Activated T-helper 2 cell treated with anti-CD3 and anti-CD28 coated beads, Interferon-gamma antibody, Interleukin-2, Interleukin-4, amounts not matched to agents 10 μg/mL and 5 μg/mL and 100 μg/mL, durations not matched to agents 14 hours and 24 hours and 36 hours (primary cell): ENCODE measurements at regions of chr1 and their contacts with region 1.

Region 1: GRCh38 chr1:110235834-110236682 is 25.9 kb downstream of the KCNC4 start:
- DNase-seq: no peak
- H3K4me3 Mint-ChIP-seq: peak overlapping the region; percentile 66
- H3K27ac Mint-ChIP-seq: peak overlapping the region; percentile 94
- H3K4me1 Mint-ChIP-seq: peaks cover 41% of the 10 kb centered on the region
- H3K27me3 Mint-ChIP-seq: no peaks in the 10 kb centered on the region

Region 2: GRCh38 chr1:110203021-110203661 is 32.9 kb before region 1 on chr1:
- intact Hi-C with region 1: loop called (anchors 5 kb)
- DNase-seq: peak; percentile 59
- H3K4me3 Mint-ChIP-seq: no peak overlapping the region
- H3K27ac Mint-ChIP-seq: peak overlapping the region; percentile 91
- H3K4me1 Mint-ChIP-seq: peaks cover 16% of the 10 kb centered on the region
- H3K27me3 Mint-ChIP-seq: no peaks in the 10 kb centered on the region

Region 3: DNA sequence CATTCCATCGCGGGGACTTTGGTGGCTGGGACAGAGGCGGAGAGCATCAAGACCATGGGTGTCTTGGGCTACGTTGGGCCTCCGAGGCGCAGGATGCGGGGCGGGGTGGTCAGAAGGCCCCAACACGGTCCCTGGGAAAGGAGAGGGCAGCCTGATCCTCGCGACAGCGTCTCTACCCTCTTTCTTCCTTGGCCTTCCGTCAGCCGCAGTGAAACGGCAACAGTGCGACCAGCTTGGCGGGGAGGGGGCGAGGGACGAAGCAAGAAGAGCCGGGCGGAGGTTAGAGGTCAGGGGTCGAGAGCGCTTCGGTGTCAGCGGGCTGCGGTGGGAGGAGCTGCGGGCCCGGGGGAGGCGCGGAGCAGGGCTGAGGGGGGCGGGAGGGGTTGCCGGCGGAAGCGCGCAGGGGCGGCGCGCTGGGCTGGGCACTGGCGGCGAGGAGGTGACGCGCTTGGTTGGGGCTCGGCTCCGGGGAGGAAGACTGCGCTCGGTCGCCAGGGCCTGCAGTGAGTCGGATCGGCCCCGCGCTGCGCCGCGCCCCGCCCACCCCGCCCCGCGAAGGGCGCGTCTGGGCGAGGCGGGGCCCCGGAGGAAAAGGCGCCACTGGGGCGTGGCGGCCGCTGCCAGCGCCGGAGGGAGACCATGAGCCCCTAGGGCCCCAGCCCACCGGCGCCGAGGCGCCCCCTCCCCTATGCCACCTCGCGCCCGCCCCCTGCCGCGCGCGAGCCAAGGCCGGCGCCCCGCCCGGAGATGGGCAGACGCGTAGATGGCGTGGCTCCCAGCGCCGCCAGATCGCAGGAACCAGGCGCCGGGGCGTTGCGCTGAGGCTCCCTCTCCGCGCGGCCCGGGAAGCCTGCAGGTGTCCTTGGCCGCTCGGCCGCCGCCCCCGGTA is 26.1 kb before region 1 on chr1 and contains the start of gene KCNC4:
- intact Hi-C with region 1: loop called (anchors 1 kb)
- DNase-seq: peak; percentile 90
- H3K4me3 Mint-ChIP-seq: peak within 1 kb of the TSS; percentile 88
- H3K27ac Mint-ChIP-seq: peak within 1 kb of the TSS; percentile 94
- H3K4me1 Mint-ChIP-seq: peaks cover 45% of the 10 kb centered on the region
- H3K27me3 Mint-ChIP-seq: no peaks in the 10 kb centered on the region
- total RNA-seq, gene KCNC4: 30.6 and 31.1 TPM in 2 replicates

Region 4: DNA sequence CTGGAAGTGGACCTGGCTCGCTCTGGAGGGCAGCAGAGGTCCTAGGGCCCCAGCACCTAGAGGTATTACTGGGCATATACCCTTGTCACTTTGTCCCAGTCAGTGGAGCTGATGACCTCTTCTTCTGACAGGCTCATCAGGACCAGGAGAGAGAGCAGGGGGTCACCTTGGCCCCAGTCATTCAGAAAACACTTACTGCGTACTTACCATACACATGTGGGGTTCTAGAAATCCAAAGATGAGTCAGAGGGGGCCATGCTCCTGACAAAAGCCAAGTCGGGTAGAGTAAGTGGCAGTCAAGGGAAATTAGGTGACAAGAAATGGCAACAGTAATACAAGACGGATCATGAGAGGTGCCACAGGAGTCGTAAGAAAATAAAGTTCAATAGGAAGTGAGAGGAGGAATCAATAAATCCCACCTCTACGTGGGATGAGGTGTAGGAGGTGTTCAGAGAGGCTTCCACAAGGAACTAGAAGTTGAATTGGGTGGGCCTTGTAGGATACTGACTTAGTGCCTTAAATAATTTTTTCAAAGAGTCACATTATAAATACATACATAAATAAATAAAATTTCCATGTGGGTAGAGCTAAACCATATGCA is 19.1 kb before region 1 on chr1:
- intact Hi-C with region 1: loop called (anchors 1 kb)
- DNase-seq: no peak
- H3K4me3 Mint-ChIP-seq: peak overlapping the region; percentile 34
- H3K27ac Mint-ChIP-seq: peak overlapping the region; percentile 65
- H3K4me1 Mint-ChIP-seq: peaks cover 45% of the 10 kb centered on the region
- H3K27me3 Mint-ChIP-seq: no peaks in the 10 kb centered on the region

Region 5: DNA sequence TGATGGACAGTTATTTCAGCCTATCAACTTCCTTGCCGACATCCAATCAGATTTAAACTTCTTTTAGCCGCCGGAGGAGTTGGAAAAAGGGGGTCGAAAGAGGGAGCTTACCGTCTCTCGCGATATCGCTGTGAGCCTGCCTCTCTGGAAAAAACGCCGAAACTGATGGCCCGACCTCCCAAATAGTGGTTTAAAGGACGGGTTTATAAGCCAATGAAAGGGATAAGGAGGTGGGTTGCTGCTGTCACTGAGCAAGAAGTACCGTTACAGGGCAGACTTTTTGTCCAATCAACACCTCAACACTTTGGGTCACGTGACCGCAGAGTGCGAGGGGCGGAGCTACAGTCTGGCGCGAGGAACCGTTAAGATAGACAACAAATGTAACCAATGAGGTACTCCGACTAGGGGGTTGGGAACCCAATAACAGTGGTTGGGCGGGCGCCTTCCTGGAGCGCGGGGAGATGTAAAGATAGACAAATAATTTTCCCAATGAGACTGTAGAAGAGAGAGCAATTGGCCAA is 102.9 kb after region 1 on chr1 and contains the start of gene RBM15:
- intact Hi-C with region 1: loop called (anchors 1 kb)
- DNase-seq: peak; percentile 98
- H3K4me3 Mint-ChIP-seq: no peak within 1 kb of the TSS
- H3K27ac Mint-ChIP-seq: no peak within 1 kb of the TSS
- H3K4me1 Mint-ChIP-seq: peaks cover 52% of the 10 kb centered on the region
- H3K27me3 Mint-ChIP-seq: no peaks in the 10 kb centered on the region
- total RNA-seq, gene RBM15: 55.5 TPM in 2 replicates

Region 6: GRCh38 chr1:110668549-110668948 is 432.5 kb after region 1 on chr1:
- intact Hi-C with region 1: loop called (anchors 2 kb)
- DNase-seq: no peak
- H3K4me3 Mint-ChIP-seq: peak overlapping the region; percentile 71
- H3K27ac Mint-ChIP-seq: peak overlapping the region; percentile 74
- H3K4me1 Mint-ChIP-seq: peaks cover 42% of the 10 kb centered on the region
- H3K27me3 Mint-ChIP-seq: no peaks in the 10 kb centered on the region

Region 7: DNA sequence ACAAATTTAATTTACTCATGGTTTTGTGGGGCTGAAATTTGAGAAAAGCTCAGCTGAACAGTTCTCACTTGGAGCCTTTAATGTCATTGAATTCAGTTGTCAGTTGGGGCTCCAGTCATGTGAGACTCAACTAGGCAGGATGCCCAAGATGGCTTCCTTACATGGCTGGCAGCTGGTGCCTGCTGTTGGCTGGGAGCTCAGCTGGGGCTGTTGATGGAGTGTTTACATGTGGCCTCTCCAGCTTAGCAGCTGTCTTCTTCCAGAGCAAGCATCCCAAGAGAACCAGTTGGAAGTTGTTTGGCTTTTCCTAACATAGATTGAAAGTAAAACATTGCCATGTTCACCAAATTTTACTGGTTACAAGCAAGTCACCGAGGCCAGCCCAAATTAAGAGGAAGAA is 520.4 kb after region 1 on chr1:
- intact Hi-C with region 1: no loop called
- DNase-seq: no peak
- H3K4me3 Mint-ChIP-seq: no peak overlapping the region
- H3K27ac Mint-ChIP-seq: no peak overlapping the region
- H3K4me1 Mint-ChIP-seq: no peaks in the 10 kb centered on the region
- H3K27me3 Mint-ChIP-seq: peaks cover 48% of the 10 kb centered on the region

Region 8: GRCh38 chr1:110872745-110873720 is 637.0 kb after region 1 on chr1 and contains the start of gene CD53:
- intact Hi-C with region 1: loop called (anchors 10 kb)
- DNase-seq: peak; percentile 39
- H3K4me3 Mint-ChIP-seq: peak within 1 kb of the TSS; percentile 98
- H3K27ac Mint-ChIP-seq: peak within 1 kb of the TSS; percentile 98
- H3K4me1 Mint-ChIP-seq: peaks cover 34% of the 10 kb centered on the region
- H3K27me3 Mint-ChIP-seq: no peaks in the 10 kb centered on the region
- total RNA-seq, gene CD53: 161 and 165 TPM in 2 replicates